AG04450 (cell line): ENCODE measurements at regions of chr11 and their contacts with region 1.

Region 1: GRCh38 chr11:65290448-65291165 is 24.1 kb upstream of the CDC42EP2 start:
- DNase-seq: peak; percentile 99
- H3K4me3 ChIP-seq: peak overlapping the region; percentile 29
- H3K27ac ChIP-seq: peak overlapping the region; percentile 100
- H3K27me3 ChIP-seq: no peaks in the 10 kb centered on the region
- CTCF ChIP-seq: no peak

Region 2: GRCh38 chr11:65301491-65302329 is 11.1 kb after region 1 on chr11:
- CTCF ChIA-PET with region 1: interaction called, 7 read pairs
- POLR2A ChIA-PET with region 1: interaction called, 12 read pairs
- DNase-seq: no peak
- H3K4me3 ChIP-seq: no peak overlapping the region
- H3K27ac ChIP-seq: peak overlapping the region; percentile 68
- H3K27me3 ChIP-seq: no peaks in the 10 kb centered on the region
- CTCF ChIP-seq: no peak